CD8-positive, alpha-beta T cell (primary cell): ENCODE measurements at regions of chr11 and their contacts with region 1.

Region 1: DNA sequence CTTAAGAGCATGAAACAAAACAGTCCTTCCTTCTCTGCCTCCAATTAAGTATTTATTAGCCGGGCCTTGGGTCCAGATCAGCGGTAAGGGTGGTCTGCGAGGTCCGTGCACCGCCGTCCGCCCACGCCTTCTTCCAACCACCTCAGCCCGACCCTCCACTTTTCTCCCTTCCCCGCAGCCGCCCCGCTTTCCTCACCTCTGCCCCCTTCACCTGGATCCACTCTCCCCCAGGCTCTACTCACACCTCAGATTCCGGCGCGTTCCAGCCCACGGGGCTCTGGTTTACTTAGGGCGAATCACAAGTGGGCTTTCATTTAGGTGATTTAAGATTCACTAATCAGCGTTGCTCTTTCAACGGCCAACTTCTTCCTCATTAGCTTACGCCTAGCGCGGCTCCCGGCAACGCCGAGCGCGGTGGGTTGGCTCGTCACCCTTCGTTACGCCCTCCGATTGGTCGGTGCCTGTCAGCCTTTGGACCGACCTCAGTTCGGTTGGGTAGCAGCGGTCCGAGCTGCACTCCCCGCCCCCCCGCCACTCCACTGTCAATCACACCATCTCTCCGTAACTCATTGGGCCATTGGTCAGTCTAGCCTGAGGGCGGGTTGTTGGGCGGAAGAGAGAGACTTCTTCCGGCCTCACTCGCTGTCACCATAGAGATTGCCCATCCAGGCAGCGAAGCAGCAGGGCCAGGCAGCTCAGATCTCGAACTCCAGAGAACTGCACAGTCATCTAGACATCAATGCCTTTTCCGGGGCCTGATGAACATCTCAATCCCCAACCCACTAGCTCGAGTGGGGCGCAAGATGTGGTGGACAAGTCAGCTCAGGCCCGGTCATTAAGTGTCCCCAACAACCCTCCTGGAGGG is at the start of gene TMEM218:
- DNase-seq: peak; percentile 89 to 99 (median 93)
- ATAC-seq: peak; percentile 88
- H3K4me3 ChIP-seq: peak within 1 kb of the TSS; percentile 89 to 92
- H3K4me3 Mint-ChIP-seq: peak within 1 kb of the TSS; percentile 99
- H3K27ac ChIP-seq: peak within 1 kb of the TSS; percentile 75 to 86
- H3K27ac Mint-ChIP-seq: peak within 1 kb of the TSS; percentile 96
- H3K4me1 ChIP-seq: peaks cover 15% of the 10 kb centered on the region
- H3K4me1 Mint-ChIP-seq: peaks cover 20% of the 10 kb centered on the region
- H3K27me3 ChIP-seq: no peaks in the 10 kb centered on the region
- H3K27me3 Mint-ChIP-seq: no peaks in the 10 kb centered on the region
- CTCF ChIP-seq: no peak
- total RNA-seq, gene TMEM218: 2.5 to 3.4 TPM

Region 2: DNA sequence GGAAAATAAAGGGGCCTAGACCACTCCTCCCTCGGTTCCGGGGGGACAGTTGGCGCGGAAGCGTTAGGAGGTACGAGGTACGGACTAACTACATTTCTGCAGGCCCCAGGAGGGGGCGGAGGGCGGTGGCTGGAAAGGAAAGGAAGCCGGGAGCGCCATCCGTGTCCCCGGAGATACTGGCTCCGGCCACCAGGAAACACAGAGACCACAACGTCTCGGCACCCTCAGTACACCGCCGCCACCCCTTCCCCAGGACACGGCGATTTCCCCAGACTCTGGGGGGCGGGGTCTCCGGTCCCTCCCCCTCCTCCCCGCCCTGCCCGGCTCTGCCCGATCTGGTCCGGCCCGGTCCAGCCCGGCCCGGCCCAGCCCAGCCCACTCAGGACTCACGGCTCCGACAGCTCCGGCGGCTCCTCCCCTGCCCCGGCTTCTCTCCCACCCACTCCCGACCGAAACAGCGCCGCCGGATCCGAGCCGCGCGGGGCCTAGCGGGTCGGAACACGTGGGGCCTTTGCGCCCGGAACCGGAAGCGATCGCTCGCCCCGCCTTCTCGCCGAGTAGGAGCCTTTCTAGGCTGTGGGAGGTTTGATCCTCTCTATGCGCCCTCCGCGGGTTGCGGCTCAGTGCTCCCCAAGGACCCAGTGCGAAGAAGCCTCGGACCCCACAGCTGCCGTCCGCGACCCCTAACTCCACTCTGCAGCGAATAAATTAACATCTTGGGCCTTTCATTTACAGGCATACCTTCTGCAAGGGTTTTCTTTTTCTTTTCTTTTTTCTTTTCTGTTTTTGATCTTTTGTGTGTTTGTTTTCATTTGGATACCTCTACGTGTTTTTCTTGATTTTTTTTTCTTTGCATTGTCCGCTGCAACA is 1370.2 kb before region 1 on chr11 and contains the start of gene ZNF202:
- CTCF ChIA-PET with region 1: no interaction called
- POLR2A ChIA-PET with region 1: no interaction called
- intact Hi-C with region 1: loop called (anchors 2 to 5 kb)
- DNase-seq: peak; percentile 78 to 94 (median 93)
- ATAC-seq: peak; percentile 93
- H3K4me3 ChIP-seq: peak within 1 kb of the TSS; percentile 51 to 91
- H3K4me3 Mint-ChIP-seq: peak within 1 kb of the TSS; percentile 94
- H3K27ac ChIP-seq: peak within 1 kb of the TSS; percentile 36 to 84
- H3K27ac Mint-ChIP-seq: peak within 1 kb of the TSS; percentile 92
- H3K4me1 ChIP-seq: peaks cover 26% of the 10 kb centered on the region
- H3K4me1 Mint-ChIP-seq: peaks cover 49% of the 10 kb centered on the region
- H3K27me3 ChIP-seq: no peaks in the 10 kb centered on the region
- H3K27me3 Mint-ChIP-seq: no peaks in the 10 kb centered on the region
- CTCF ChIP-seq: peak; percentile 30
- total RNA-seq, gene ZNF202: 10.7 to 11.4 TPM

Region 3: GRCh38 chr11:124746621-124747243 is 364.8 kb before region 1 on chr11:
- CTCF ChIA-PET with region 1: no interaction called
- POLR2A ChIA-PET with region 1: no interaction called
- intact Hi-C with region 1: loop called in 1 of 2 experiments (anchors 5 kb)
- DNase-seq: peak; percentile 64 to 90 (median 79)
- ATAC-seq: peak; percentile 92
- H3K4me3 ChIP-seq: peak overlapping the region; percentile 87 to 98
- H3K4me3 Mint-ChIP-seq: peak overlapping the region; percentile 95
- H3K27ac ChIP-seq: peak overlapping the region; percentile 58 to 80
- H3K27ac Mint-ChIP-seq: peak overlapping the region; percentile 91
- H3K4me1 ChIP-seq: peaks cover 11% of the 10 kb centered on the region
- H3K4me1 Mint-ChIP-seq: peaks cover 15% of the 10 kb centered on the region
- H3K27me3 ChIP-seq: no peaks in the 10 kb centered on the region
- H3K27me3 Mint-ChIP-seq: peaks cover 2% of the 10 kb centered on the region
- CTCF ChIP-seq: peak; percentile 55

Region 4: DNA sequence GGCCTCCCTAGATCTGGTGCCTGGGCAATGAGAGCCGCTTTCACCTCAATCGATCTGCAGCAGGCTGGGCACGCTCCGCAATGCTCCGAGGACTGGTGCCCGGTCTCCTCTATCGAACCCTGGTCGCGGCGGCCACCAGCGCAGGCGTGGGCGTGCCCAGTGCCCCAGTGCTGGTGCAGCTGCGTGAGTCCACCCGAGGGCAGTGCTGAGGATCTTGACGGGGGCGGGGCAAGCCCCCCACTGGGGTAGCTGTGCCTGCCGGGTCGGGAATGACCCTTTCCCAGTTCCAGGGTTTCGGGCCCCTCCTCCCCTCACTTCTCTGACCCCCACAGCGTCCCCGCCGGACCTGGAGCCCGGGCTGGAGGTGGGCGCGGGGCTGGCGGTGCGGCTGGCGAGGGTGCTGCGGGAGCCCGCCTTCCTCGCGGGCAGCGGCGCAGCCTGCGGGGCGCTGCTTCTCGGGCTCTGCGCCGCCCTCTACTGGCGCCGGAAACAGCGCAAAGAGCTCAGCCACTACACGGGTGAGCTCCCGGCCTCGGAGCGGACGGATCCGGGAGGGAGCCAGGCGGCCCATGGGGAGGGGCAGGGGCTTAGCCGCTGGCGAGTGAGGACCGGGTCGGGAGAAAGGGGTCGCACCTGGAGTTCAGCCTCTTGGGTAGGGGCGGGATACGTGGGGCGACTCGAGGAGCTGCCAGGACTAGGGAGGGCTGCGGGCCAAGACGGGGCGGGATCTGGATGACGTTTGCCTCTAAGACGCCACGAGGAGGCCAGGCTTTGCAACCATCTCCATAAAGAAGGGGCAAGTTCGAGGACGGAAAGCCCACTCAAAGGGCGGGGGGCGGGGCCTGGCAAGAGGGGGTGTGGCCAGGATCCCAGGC is 235.4 kb before region 1 on chr11:
- CTCF ChIA-PET with region 1: interaction called, 3 read pairs
- POLR2A ChIA-PET with region 1: interaction called, 6 read pairs
- intact Hi-C with region 1: loop called (anchors 1 to 2 kb)
- DNase-seq: peak; percentile 60 to 90 (median 76)
- ATAC-seq: peak; percentile 91
- H3K4me3 ChIP-seq: peak overlapping the region; percentile 75 to 88
- H3K4me3 Mint-ChIP-seq: peak overlapping the region; percentile 93
- H3K27ac ChIP-seq: peak overlapping the region; percentile 77 to 96
- H3K27ac Mint-ChIP-seq: peak overlapping the region; percentile 92
- H3K4me1 ChIP-seq: peaks cover 16% of the 10 kb centered on the region
- H3K4me1 Mint-ChIP-seq: peaks cover 24% of the 10 kb centered on the region
- H3K27me3 ChIP-seq: no peaks in the 10 kb centered on the region
- H3K27me3 Mint-ChIP-seq: peaks cover 27% of the 10 kb centered on the region
- CTCF ChIP-seq: peak; percentile 65

Region 5: GRCh38 chr11:125091247-125091876 is 20.2 kb before region 1 on chr11:
- CTCF ChIA-PET with region 1: interaction called, 16 read pairs
- POLR2A ChIA-PET with region 1: interaction called, 5 read pairs
- intact Hi-C with region 1: no loop called
- DNase-seq: peak in 3 of 9 experiments; percentile 30 to 48 (median 47)
- ATAC-seq: no peak
- H3K4me3 ChIP-seq: no peak overlapping the region
- H3K4me3 Mint-ChIP-seq: no peak overlapping the region
- H3K27ac ChIP-seq: no peak overlapping the region
- H3K27ac Mint-ChIP-seq: no peak overlapping the region
- H3K4me1 ChIP-seq: no peaks in the 10 kb centered on the region
- H3K4me1 Mint-ChIP-seq: no peaks in the 10 kb centered on the region
- H3K27me3 ChIP-seq: no peaks in the 10 kb centered on the region
- H3K27me3 Mint-ChIP-seq: no peaks in the 10 kb centered on the region
- CTCF ChIP-seq: no peak

Region 6: DNA sequence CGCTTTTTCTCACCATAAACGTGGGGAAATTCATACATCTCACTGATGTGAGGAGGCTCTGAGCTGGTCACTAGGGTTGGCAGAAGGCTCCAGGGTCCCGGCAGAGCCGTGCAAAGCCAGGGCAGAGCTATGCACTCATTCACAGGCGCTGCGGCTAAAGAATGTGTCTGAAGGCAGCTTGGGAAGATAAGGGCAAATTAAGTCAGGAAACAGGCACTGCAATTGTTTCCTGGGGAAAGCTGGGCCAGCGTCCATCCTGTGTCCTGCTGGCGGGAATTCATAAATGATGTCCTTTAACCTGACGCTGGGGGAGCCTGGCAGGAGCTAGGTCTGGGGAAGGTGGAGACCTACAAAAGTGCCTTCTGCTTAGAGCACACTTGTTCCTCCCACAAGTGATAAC is 80.6 kb after region 1 on chr11:
- CTCF ChIA-PET with region 1: no interaction called
- POLR2A ChIA-PET with region 1: no interaction called
- intact Hi-C with region 1: no loop called
- DNase-seq: no peak
- ATAC-seq: no peak
- H3K4me3 ChIP-seq: no peak overlapping the region
- H3K4me3 Mint-ChIP-seq: no peak overlapping the region
- H3K27ac ChIP-seq: no peak overlapping the region
- H3K27ac Mint-ChIP-seq: no peak overlapping the region
- H3K4me1 ChIP-seq: no peaks in the 10 kb centered on the region
- H3K4me1 Mint-ChIP-seq: no peaks in the 10 kb centered on the region
- H3K27me3 ChIP-seq: no peaks in the 10 kb centered on the region
- H3K27me3 Mint-ChIP-seq: peaks cover 58% of the 10 kb centered on the region
- CTCF ChIP-seq: no peak

Region 7: DNA sequence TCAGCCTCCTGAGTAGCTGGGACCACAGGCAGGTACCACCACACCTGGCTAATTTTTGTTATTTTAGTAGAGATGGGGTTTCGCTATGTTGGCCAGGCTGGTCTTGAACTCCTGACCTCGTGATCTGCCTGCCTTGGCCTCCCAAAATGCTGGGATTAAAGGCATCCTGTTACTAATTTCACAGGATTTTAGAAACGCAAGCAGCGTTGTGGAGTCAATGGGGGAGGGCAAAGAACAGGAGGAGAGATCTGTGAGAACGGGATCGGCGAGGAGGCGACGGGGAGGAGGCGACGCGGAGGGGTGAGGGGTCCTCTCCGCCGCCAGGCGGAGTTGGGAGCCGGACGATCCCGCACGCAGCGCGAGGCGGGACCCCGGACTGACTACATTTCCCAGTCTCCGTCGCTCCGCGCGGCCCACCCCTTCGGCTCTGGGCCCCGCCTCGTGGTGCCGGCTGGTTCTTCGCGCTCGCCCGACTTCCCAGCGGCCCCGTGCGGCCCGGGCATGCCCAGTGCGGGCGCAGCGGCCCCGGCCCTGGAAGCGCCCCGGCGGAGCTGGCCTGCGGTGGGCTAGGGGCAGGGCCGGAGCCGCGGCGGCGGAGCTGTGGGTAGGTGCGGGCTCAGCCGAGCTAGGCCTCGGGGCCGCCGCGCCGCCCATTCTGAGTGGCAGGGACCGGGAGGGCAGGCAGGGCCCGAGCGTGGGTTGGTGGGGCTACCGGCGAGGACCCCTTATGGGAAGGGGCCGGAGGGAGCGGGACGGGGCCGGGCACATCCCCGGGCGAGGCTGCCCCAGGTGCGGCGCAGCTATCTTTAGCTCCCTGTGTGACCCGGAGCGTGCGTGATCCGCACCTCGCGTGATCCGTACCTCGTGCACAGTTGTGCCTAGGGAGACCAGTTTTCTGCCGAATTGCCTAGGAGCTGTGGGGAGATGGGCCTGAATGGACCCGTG is 457.7 kb after region 1 on chr11 and contains the start of gene EI24:
- CTCF ChIA-PET with region 1: no interaction called
- POLR2A ChIA-PET with region 1: no interaction called
- intact Hi-C with region 1: loop called in 1 of 2 experiments (anchors 1 kb)
- DNase-seq: peak; percentile 71 to 95 (median 86)
- ATAC-seq: peak; percentile 95
- H3K4me3 ChIP-seq: peak within 1 kb of the TSS; percentile 81 to 92
- H3K4me3 Mint-ChIP-seq: peak within 1 kb of the TSS; percentile 93
- H3K27ac ChIP-seq: peak within 1 kb of the TSS; percentile 80 to 82
- H3K27ac Mint-ChIP-seq: peak within 1 kb of the TSS; percentile 95
- H3K4me1 ChIP-seq: peaks cover 16% of the 10 kb centered on the region
- H3K4me1 Mint-ChIP-seq: peaks cover 37% of the 10 kb centered on the region
- H3K27me3 ChIP-seq: no peaks in the 10 kb centered on the region
- H3K27me3 Mint-ChIP-seq: no peaks in the 10 kb centered on the region
- CTCF ChIP-seq: peak; percentile 60
- total RNA-seq, gene EI24: 20.5 to 22.4 TPM

Region 8: DNA sequence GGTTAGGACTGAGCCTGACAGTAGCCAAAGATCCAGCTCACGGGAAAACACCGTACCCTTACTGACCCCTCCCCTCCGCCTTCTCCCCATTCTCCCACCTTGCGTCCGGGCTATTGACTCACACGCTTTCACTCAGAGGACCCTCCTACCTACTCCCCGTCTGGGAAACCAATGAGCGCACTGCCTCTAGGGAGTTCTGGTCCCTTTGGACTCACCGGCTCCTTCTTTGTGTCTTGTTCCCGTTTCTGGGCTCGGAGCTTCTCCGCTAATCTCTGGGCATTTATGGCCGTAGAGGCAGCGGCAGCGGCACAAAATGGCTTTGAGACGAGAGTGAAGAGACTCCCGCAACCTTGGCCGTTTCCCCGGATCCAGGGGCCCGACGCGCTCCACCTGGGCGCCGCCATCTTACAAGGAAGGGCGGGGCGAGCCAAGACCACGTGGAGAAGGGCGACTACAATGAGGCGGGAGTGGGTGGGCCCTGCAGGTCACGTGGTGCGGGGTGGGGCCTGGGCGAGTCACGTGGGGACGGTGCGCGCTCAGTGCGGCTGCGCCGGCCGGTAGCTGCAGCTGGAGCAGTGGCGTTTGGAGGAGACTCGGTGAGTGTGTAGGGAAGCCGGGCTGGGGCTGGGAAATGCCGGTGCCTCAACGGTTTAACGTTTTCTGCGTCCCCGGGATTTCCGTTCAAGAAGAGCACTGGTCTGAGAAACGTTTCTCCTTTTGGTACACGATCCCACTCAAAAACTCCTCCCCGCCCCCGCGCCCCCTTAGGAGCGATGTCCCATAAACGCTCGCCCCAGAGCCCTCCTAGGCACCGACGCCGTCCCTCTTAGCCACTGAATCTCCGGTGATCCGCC is 1099.9 kb after region 1 on chr11 and contains the starts of genes FAM118B and RPUSD4:
- CTCF ChIA-PET with region 1: no interaction called
- POLR2A ChIA-PET with region 1: no interaction called
- intact Hi-C with region 1: loop called (anchors 5 to 10 kb)
- DNase-seq: peak; percentile 98 to 99 (median 98)
- ATAC-seq: peak; percentile 95
- H3K4me3 ChIP-seq: peak within 1 kb of the TSS; percentile 95 to 98
- H3K4me3 Mint-ChIP-seq: peak within 1 kb of the TSS; percentile 99
- H3K27ac ChIP-seq: peak within 1 kb of the TSS; percentile 71 to 80
- H3K27ac Mint-ChIP-seq: peak within 1 kb of the TSS; percentile 95
- H3K4me1 ChIP-seq: peaks cover 18% of the 10 kb centered on the region
- H3K4me1 Mint-ChIP-seq: peaks cover 40% of the 10 kb centered on the region
- H3K27me3 ChIP-seq: no peaks in the 10 kb centered on the region
- H3K27me3 Mint-ChIP-seq: no peaks in the 10 kb centered on the region
- CTCF ChIP-seq: no peak
- total RNA-seq, gene FAM118B: 0.64 to 0.79 TPM
- total RNA-seq, gene RPUSD4: 42.3 to 43.8 TPM